ENCODE measurements at regions of chr9 and their contacts with region 1.

Region 1: GRCh38 chr9:119961774-119962424 is 592.7 kb upstream of the BRINP1 start:
- DNase-seq: peak; percentile 37
- H3K4me3 ChIP-seq: no peak overlapping the region
- H3K27ac ChIP-seq: no peak overlapping the region
- H3K4me1 ChIP-seq: no peaks in the 10 kb centered on the region
- H3K27me3 ChIP-seq: no peaks in the 10 kb centered on the region
- CTCF ChIP-seq: peak; percentile 62

Region 2: GRCh38 chr9:120014799-120015198 is 52.9 kb after region 1 on chr9:
- intact Hi-C with region 1: no loop called
- DNase-seq: no peak
- H3K4me3 ChIP-seq: no peak overlapping the region
- H3K27ac ChIP-seq: no peak overlapping the region
- H3K4me1 ChIP-seq: no peaks in the 10 kb centered on the region
- H3K27me3 ChIP-seq: no peaks in the 10 kb centered on the region
- CTCF ChIP-seq: no peak

Region 3: GRCh38 chr9:120348951-120349429 is 387.1 kb after region 1 on chr9:
- intact Hi-C with region 1: loop called (anchors 5 kb)
- DNase-seq: no peak
- H3K4me3 ChIP-seq: no peak overlapping the region
- H3K27ac ChIP-seq: no peak overlapping the region
- H3K4me1 ChIP-seq: no peaks in the 10 kb centered on the region
- H3K27me3 ChIP-seq: no peaks in the 10 kb centered on the region
- CTCF ChIP-seq: peak; percentile 25

Region 4: GRCh38 chr9:120477521-120478001 is 515.7 kb after region 1 on chr9:
- intact Hi-C with region 1: loop called (anchors 5 kb)
- DNase-seq: peak; percentile 71
- H3K4me3 ChIP-seq: no peak overlapping the region
- H3K27ac ChIP-seq: no peak overlapping the region
- H3K4me1 ChIP-seq: no peaks in the 10 kb centered on the region
- H3K27me3 ChIP-seq: no peaks in the 10 kb centered on the region
- CTCF ChIP-seq: peak; percentile 92